Posterior vena cava (tissue), 2 donors: ENCODE measurements at regions of chr3 and their contacts with region 1.

Region 1: GRCh38 chr3:65322910-65323309 is 635.1 kb upstream of the ADAMTS9 start:
- DNase-seq: no peak

Region 2: DNA sequence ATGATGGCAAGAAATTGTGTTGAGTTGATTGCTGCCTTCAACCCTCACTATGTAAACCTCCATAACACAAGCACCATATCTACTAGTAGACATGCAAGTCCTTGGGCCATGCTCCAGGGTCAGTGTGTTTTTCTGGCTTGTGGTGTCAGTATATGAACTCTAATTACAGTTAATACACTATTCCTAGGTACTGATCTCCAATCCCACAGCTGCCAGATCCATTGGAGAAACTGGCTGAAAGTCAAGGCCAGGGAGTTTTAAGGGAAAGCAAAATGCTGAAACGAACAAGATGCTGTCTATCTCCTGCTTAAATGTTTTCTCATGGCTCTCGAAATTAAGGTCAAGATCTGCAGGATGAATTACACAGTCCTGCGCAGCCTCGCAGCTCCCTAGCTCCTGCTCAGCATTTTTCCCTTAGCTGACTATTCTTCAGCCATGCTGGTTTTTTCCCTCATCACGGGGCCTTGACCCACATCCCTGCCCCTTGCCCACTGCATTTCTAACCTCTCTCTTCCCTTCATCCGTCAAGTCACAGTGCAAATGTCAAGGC is 210.1 kb before region 1 on chr3:
- intact Hi-C with region 1: no loop called
- DNase-seq: no peak

Region 3: DNA sequence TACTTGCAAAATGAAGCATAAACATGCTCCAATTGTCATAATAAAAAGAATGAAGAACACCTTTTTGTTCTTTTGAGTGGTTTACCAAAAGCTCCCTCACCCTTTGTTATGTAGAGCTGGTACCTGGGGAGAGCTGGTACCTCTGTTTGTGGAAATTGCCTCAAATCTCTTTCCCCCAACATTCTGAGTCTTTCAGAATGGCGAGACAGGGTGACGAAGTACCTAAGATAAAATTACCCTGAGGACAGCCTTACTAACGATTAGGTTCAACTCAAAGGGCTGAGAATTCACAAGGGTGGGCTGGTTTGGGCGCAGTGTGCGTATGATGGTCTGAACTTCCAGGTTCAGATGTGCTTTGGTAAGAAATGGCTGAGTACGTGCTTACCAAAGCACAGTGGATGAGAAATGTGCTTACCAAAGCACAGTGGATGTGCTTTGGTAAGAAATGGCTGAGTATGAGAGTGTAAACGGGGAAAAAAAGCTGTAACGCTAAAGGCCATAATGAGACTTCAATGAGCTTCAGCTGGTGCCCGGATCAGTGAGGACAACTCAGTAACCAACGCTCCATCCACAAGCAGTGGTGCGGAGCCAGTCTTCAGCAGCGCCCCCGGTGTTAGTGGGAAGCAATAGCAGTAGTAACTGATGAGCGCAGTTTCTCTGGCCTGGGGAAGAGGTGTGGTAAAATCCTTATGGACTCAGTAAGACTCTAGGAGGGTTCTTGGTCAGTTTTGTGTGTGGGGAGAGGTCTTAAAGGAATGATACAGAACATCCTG is 1250.2 kb after region 1 on chr3:
- intact Hi-C with region 1: loop called in 1 of 2 experiments (anchors 5 kb)
- DNase-seq: no peak